ENCODE measurements at regions of chr17 and their contacts with region 1.

Region 1: GRCh38 chr17:1865252-1866037 is 35.6 kb downstream of the RPA1 start:
- DNase-seq: peak; percentile 64
- ATAC-seq: peak; percentile 60
- H3K4me3 Mint-ChIP-seq: no peak overlapping the region
- H3K27ac Mint-ChIP-seq: no peak overlapping the region
- H3K4me1 Mint-ChIP-seq: peaks cover 18% of the 10 kb centered on the region
- H3K27me3 Mint-ChIP-seq: no peaks in the 10 kb centered on the region
- CTCF ChIP-seq: peak; percentile 79

Region 2: DNA sequence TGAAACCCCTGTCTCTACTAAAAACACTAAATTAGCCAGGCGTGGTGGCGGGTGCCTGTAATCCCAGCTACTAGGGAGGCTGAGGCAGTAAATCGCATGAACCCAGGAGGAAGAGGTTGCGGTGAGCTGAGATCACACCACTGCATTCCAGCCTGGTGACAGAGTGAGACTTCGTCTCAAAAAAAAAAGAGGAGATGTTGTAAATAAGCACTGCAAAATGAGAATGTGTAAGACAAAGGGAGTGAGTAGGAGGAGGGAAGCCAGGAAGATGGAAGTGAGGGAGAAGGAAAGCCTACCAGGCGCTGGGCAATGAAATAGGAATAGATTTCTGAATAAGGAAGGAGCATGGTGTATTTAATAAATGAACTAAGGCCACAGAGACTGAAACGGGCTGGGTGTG is 172.1 kb before region 1 on chr17:
- CTCF ChIA-PET with region 1: no interaction called
- POLR2A ChIA-PET with region 1: no interaction called
- intact Hi-C with region 1: no loop called
- DNase-seq: no peak
- ATAC-seq: no peak
- H3K4me3 Mint-ChIP-seq: no peak overlapping the region
- H3K27ac Mint-ChIP-seq: no peak overlapping the region
- H3K4me1 Mint-ChIP-seq: no peaks in the 10 kb centered on the region
- H3K27me3 Mint-ChIP-seq: no peaks in the 10 kb centered on the region
- CTCF ChIP-seq: no peak

Region 3: DNA sequence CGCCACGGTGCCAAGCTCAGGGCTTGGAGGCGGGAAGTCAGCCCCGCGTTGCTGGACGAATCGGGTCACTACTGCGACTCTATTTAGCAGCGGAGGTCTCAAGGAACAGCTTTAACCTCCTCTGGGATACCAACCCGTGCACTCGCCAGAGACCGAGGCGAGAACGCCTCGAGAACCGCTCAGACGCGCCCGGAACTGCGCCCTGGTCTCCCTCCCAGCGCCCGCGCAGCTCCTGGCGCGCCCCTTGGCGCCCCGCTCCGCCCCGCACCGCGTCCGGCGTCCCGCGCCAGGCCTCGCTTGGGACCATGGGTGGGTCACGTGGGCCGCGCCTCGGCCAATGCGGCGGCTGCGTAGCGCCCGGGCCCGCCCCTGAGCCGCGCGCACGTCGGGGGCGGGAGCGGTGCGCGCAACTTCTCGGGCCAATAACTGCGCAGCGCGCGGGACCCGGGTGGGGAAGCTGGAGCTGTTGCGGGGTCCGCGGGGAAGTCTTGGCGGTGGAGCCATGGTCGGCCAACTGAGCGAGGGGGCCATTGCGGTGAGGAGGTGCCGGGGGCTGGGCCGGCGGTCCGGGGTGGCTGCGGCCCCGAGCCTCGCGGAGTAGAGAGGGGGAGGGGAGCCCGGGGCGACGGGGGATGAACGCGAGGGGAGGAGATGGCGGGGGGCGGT is 35.7 kb before region 1 on chr17 and contains the starts of genes RPA1 and SMYD4:
- CTCF ChIA-PET with region 1: interaction called, 19 read pairs
- POLR2A ChIA-PET with region 1: no interaction called
- intact Hi-C with region 1: no loop called
- DNase-seq: peak; percentile 90
- ATAC-seq: peak; percentile 98
- H3K4me3 Mint-ChIP-seq: peak within 1 kb of the TSS; percentile 92
- H3K27ac Mint-ChIP-seq: peak within 1 kb of the TSS; percentile 93
- H3K4me1 Mint-ChIP-seq: peaks cover 59% of the 10 kb centered on the region
- H3K27me3 Mint-ChIP-seq: no peaks in the 10 kb centered on the region
- CTCF ChIP-seq: no peak
- total RNA-seq, gene RPA1: 189 to 197 TPM
- total RNA-seq, gene SMYD4: 22.2 to 22.7 TPM

Region 4: DNA sequence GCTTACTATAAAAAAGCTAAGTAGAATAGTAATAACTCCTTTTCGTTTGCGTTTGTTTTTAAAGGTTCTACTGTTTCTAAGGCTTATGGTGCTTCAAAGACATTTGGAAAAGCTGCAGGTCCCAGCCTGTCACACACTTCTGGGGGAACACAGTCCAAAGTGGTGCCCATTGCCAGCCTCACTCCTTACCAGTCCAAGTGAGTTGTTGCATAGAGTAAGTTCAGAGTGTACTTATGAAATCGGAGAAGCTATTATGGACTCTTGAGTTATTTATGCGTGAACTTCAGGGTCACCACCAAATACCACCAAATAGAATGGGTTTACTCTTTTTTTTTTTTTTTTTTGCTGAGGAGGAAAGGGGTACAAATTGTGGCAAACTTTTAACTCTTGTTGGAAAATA is 10.2 kb after region 1 on chr17:
- CTCF ChIA-PET with region 1: interaction called, 50 read pairs
- POLR2A ChIA-PET with region 1: interaction called, 6 read pairs
- intact Hi-C with region 1: no loop called
- DNase-seq: no peak
- ATAC-seq: no peak
- H3K4me3 Mint-ChIP-seq: no peak overlapping the region
- H3K27ac Mint-ChIP-seq: no peak overlapping the region
- H3K4me1 Mint-ChIP-seq: peaks cover 34% of the 10 kb centered on the region
- H3K27me3 Mint-ChIP-seq: no peaks in the 10 kb centered on the region
- CTCF ChIP-seq: no peak

Region 5: DNA sequence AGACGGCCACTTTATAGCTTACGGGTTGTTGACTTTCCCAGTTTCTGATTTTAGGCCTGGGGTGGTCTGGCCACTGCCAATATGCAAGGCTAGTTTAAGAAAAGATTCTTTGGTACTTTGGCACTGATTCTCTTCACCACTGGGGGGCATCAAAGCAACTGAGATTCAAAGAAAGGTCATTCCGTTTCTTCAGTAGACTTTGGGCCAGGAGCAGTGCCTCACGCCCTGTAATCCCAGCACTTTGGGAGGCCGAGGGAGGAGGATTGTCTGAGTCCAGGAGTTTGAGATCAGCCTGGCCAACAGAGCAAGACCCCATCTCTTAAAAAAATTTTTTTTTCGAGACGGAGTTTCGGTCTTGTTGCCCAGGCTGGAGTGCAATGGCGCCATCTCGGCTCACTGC is 17.4 kb after region 1 on chr17:
- CTCF ChIA-PET with region 1: interaction called, 50 read pairs
- POLR2A ChIA-PET with region 1: interaction called, 3 read pairs
- intact Hi-C with region 1: no loop called
- DNase-seq: peak; percentile 52
- ATAC-seq: peak; percentile 53
- H3K4me3 Mint-ChIP-seq: no peak overlapping the region
- H3K27ac Mint-ChIP-seq: no peak overlapping the region
- H3K4me1 Mint-ChIP-seq: no peaks in the 10 kb centered on the region
- H3K27me3 Mint-ChIP-seq: no peaks in the 10 kb centered on the region
- CTCF ChIP-seq: peak; percentile 53

Measured in activated CD8-positive, alpha-beta T cell treated with anti-CD3 and anti-CD28 coated beads for 36 hours (primary cell).